ENCODE measurements at regions of chr12 and their contacts with region 1.

Region 1: DNA sequence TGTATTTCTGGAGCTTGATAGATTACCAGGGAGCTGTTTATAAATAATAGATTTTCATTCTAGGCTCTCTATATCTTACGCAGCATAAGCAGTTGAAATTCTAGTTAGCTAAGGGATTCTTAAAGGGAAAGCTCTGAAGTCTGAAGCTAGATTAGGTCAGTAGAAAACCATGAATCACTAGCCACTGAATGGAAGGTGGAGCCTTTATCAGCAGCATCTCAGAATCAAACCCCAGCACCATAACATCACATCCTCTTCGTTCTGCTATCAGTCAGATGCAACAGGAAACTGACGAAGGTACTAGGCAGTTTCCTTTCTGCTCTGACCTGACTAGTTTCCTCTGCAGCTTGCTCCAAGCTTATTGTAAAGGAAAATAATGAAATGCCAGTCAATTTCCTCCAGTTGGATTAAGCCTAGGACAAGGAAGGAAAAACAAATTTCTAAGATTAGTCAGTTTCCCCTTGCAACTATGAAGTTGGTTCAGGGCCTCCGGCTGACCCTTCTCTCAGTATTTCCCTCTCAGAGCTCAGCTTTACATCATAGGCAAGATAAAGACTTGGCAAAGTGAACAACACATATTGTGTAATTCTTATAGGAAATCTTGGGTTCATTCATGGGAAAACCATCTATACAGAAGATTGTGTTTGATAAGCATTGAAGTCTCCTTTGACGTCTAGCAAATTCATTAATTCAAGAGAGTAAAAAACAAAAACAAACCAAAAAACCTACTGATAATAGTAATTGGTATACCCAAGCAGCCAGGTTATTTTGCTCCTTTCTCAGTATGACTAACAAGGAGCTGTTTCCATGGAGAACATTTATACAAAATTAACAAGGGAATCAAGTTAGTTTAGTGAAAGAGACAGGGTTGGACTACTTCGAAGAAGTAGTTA is 43.4 kb upstream of the CFAP54 start:
- DNase-seq: peak; percentile 15
- H3K4me3 Mint-ChIP-seq: no peak overlapping the region
- H3K27ac Mint-ChIP-seq: peak overlapping the region; percentile 80
- H3K4me1 Mint-ChIP-seq: peaks cover 14% of the 10 kb centered on the region
- H3K27me3 Mint-ChIP-seq: no peaks in the 10 kb centered on the region
- CTCF ChIP-seq: no peak

Region 2: DNA sequence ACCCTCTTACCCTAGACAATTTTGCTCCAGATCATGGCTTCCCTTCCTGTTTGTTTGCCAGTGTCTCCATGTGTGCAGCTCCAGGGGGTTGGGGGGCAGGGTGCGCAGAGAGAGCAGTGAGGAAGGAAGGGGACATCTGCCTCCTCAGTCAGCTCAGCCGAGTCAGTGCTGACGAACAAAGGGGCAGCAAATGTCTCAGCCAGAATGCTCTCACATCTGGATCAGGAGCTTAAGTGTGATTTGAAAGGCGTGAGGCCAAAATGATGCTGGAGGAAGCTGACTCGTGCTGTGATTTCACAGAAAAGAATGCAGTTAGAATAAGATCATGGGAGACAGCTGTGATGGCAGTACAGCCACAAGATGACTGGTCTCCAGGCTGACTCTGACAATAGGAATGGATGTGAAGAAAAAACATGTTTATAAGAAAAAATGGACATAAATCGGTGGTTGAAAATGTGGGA is 18.6 kb before region 1 on chr12:
- CTCF ChIA-PET with region 1: interaction called, 10 read pairs
- intact Hi-C with region 1: no loop called
- DNase-seq: no peak
- H3K4me3 Mint-ChIP-seq: no peak overlapping the region
- H3K27ac Mint-ChIP-seq: no peak overlapping the region
- H3K4me1 Mint-ChIP-seq: peaks cover 23% of the 10 kb centered on the region
- H3K27me3 Mint-ChIP-seq: no peaks in the 10 kb centered on the region
- CTCF ChIP-seq: no peak

Region 3: DNA sequence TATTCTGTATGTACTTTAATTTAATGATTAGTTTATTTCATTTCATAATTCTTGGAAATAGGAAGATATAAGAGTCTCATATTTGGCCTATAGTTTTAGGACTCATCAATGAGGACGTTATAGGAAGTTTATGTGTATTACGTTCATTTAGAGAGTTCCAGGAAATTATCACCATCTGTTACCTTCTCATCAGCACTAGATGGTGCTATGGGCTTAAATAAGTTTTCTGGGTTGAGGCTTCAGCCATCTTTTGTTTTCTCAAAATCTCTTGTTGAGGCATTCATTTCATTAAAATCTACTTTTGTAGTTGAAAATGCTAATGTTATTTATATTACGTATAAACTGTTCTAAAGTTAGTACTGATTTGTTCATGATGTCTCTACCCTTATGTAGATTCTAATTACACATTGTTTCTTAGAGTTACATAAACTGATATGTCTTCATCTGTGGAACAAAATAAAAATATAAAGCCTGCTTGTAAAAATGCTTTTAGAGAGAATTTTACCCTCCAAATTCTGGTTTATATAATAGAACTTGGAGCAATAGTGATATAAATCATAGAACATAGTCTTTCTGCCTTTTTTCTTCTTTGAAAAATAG is 132.7 kb after region 1 on chr12:
- CTCF ChIA-PET with region 1: no interaction called
- intact Hi-C with region 1: no loop called
- DNase-seq: peak; percentile 20
- H3K4me3 Mint-ChIP-seq: no peak overlapping the region
- H3K27ac Mint-ChIP-seq: no peak overlapping the region
- H3K4me1 Mint-ChIP-seq: no peaks in the 10 kb centered on the region
- H3K27me3 Mint-ChIP-seq: no peaks in the 10 kb centered on the region
- CTCF ChIP-seq: peak; percentile 34